ENCODE measurements at regions of chr5 and their contacts with region 1.

Region 1: GRCh38 chr5:148443998-148444397 is 60.2 kb downstream of the FBXO38 start:
- DNase-seq: peak in 7 of 9 donors; percentile 23 to 53 (median 41)
- ATAC-seq: peak; percentile 84
- H3K4me3 ChIP-seq: no peak overlapping the region
- H3K4me3 Mint-ChIP-seq: no peak overlapping the region
- H3K27ac ChIP-seq: no peak overlapping the region
- H3K27ac Mint-ChIP-seq: peak overlapping the region in 2 of 9 donors; percentile 12 to 40
- H3K4me1 ChIP-seq: no peaks in the 10 kb centered on the region
- H3K4me1 Mint-ChIP-seq: peaks cover 0 to 5% (median 0%) of the 10 kb centered on the region in 7 donors
- H3K27me3 ChIP-seq: no peaks in the 10 kb centered on the region
- H3K27me3 Mint-ChIP-seq: peaks cover 0 to 2% (median 0%) of the 10 kb centered on the region in 5 donors

Region 2: GRCh38 chr5:148397968-148398597 is 45.9 kb before region 1 on chr5:
- CTCF ChIA-PET with region 1: no interaction called
- POLR2A ChIA-PET with region 1: no interaction called
- intact Hi-C with region 1: loop called in 1 of 2 experiments (anchors 5 kb)
- DNase-seq: no peak
- ATAC-seq: no peak
- H3K4me3 ChIP-seq: no peak overlapping the region
- H3K4me3 Mint-ChIP-seq: no peak overlapping the region
- H3K27ac ChIP-seq: no peak overlapping the region
- H3K27ac Mint-ChIP-seq: peak overlapping the region in 6 of 9 donors; percentile 11 to 82 (median 40)
- H3K4me1 ChIP-seq: no peaks in the 10 kb centered on the region
- H3K4me1 Mint-ChIP-seq: peaks cover 32 to 80% (median 58%) of the 10 kb centered on the region in 7 donors
- H3K27me3 ChIP-seq: no peaks in the 10 kb centered on the region
- H3K27me3 Mint-ChIP-seq: no peaks in the 10 kb centered on the region

Region 3: DNA sequence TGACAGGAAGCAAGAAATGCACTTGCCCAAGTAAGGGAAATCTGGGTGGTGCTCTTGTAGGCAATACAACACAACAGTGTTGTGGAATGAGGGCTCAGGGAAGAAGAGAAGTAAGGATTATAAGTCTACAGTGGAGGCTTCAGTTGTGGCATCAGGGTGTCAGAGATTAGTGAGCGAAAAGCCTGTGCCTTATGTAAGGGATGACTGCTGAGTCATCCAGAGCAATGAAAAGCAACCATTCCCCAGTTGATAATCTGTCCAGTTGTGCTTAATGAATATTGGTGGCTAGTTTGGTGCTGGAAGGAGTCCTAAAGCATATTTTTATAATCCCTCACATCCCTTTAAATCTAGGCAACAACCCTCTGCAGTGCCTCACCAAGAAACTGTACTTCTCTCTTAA is 18.2 kb before region 1 on chr5:
- CTCF ChIA-PET with region 1: interaction called, 3 read pairs
- POLR2A ChIA-PET with region 1: no interaction called
- intact Hi-C with region 1: loop called in 1 of 2 experiments (anchors 2 kb)
- DNase-seq: no peak
- ATAC-seq: no peak
- H3K4me3 ChIP-seq: no peak overlapping the region
- H3K4me3 Mint-ChIP-seq: no peak overlapping the region
- H3K27ac ChIP-seq: no peak overlapping the region
- H3K27ac Mint-ChIP-seq: peak overlapping the region in 7 of 9 donors; percentile 11 to 74 (median 33)
- H3K4me1 ChIP-seq: no peaks in the 10 kb centered on the region
- H3K4me1 Mint-ChIP-seq: peaks cover under 1 to 28% (median 24%) of the 10 kb centered on the region in 7 donors
- H3K27me3 ChIP-seq: no peaks in the 10 kb centered on the region
- H3K27me3 Mint-ChIP-seq: no peaks in the 10 kb centered on the region

Region 4: DNA sequence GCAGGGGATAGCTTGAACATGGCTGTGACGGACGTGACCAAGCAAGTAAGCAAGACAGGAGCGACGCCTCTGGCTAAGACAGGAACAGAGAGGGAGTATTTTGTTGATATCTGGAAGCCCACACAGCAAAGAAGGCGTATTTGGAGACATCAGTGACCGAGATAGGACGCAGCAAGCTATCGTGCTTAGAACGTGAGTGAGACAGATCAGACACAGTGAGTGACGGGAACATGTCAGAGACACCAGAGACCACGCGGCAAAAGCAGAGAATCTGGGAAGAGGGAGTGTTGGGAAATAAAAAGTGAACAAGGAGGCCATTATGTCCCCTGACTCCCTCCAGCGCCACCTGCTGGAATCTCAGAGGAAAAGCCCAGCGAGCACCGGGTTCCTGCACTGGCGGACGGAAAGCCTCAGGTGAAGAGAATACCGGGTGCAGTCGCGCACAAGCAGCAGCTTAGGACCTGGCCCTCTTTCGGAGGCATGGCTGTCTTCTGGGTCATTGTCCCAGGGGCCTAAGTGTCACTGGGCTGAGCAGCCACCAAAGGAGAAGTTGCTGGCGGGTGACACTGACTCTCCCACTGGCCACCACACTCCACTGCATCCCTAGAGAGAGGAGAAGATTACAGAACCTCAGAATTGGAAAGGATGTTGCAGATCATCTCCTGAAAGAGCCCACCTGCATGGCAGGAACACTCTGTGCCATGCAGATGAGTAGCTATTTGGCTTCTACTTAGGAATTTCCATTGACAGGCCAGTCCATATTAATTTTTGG is 38.9 kb after region 1 on chr5:
- CTCF ChIA-PET with region 1: no interaction called
- POLR2A ChIA-PET with region 1: no interaction called
- intact Hi-C with region 1: loop called (anchors 1 to 2 kb)
- DNase-seq: peak; percentile 8 to 62 (median 41)
- ATAC-seq: peak; percentile 80
- H3K4me3 ChIP-seq: no peak overlapping the region
- H3K4me3 Mint-ChIP-seq: peak overlapping the region in 6 of 10 donors; percentile 2 to 55 (median 30)
- H3K27ac ChIP-seq: no peak overlapping the region
- H3K27ac Mint-ChIP-seq: peak overlapping the region in 1 of 9 donors; percentile 57
- H3K4me1 ChIP-seq: no peaks in the 10 kb centered on the region
- H3K4me1 Mint-ChIP-seq: peaks cover 0 to 10% (median 6%) of the 10 kb centered on the region in 7 donors
- H3K27me3 ChIP-seq: no peaks in the 10 kb centered on the region
- H3K27me3 Mint-ChIP-seq: peaks cover 30 to 56% (median 50%) of the 10 kb centered on the region in 5 donors

Region 5: GRCh38 chr5:148606296-148606695 is 162.3 kb after region 1 on chr5:
- CTCF ChIA-PET with region 1: no interaction called
- POLR2A ChIA-PET with region 1: no interaction called
- intact Hi-C with region 1: no loop called
- DNase-seq: no peak
- ATAC-seq: no peak
- H3K4me3 ChIP-seq: no peak overlapping the region
- H3K4me3 Mint-ChIP-seq: no peak overlapping the region
- H3K27ac ChIP-seq: no peak overlapping the region
- H3K27ac Mint-ChIP-seq: no peak overlapping the region
- H3K4me1 ChIP-seq: no peaks in the 10 kb centered on the region
- H3K4me1 Mint-ChIP-seq: no peaks in the 10 kb centered on the region
- H3K27me3 ChIP-seq: no peaks in the 10 kb centered on the region
- H3K27me3 Mint-ChIP-seq: peaks cover 0 to 10% (median 6%) of the 10 kb centered on the region in 5 donors

Region 6: GRCh38 chr5:149114403-149115312 is 670.7 kb after region 1 on chr5:
- CTCF ChIA-PET with region 1: no interaction called
- POLR2A ChIA-PET with region 1: no interaction called
- intact Hi-C with region 1: loop called in 1 of 2 experiments (anchors 1 kb)
- DNase-seq: peak in 5 of 9 donors; percentile 27 to 45 (median 32)
- ATAC-seq: peak; percentile 76
- H3K4me3 ChIP-seq: no peak overlapping the region
- H3K4me3 Mint-ChIP-seq: no peak overlapping the region
- H3K27ac ChIP-seq: no peak overlapping the region
- H3K27ac Mint-ChIP-seq: no peak overlapping the region
- H3K4me1 ChIP-seq: no peaks in the 10 kb centered on the region
- H3K4me1 Mint-ChIP-seq: peaks cover 0 to 1% (median 0%) of the 10 kb centered on the region in 7 donors
- H3K27me3 ChIP-seq: no peaks in the 10 kb centered on the region
- H3K27me3 Mint-ChIP-seq: peaks cover 19 to 31% (median 27%) of the 10 kb centered on the region in 5 donors

Region 7: GRCh38 chr5:149697001-149697400 is 1253.0 kb after region 1 on chr5:
- CTCF ChIA-PET with region 1: no interaction called
- POLR2A ChIA-PET with region 1: no interaction called
- intact Hi-C with region 1: no loop called
- DNase-seq: no peak
- ATAC-seq: no peak
- H3K4me3 ChIP-seq: no peak overlapping the region
- H3K4me3 Mint-ChIP-seq: no peak overlapping the region
- H3K27ac ChIP-seq: no peak overlapping the region
- H3K27ac Mint-ChIP-seq: no peak overlapping the region
- H3K4me1 ChIP-seq: no peaks in the 10 kb centered on the region
- H3K4me1 Mint-ChIP-seq: no peaks in the 10 kb centered on the region
- H3K27me3 ChIP-seq: no peaks in the 10 kb centered on the region
- H3K27me3 Mint-ChIP-seq: peaks cover 0 to 26% (median 5%) of the 10 kb centered on the region in 5 donors

Measured in naive thymus-derived CD4-positive, alpha-beta T cell (primary cell).